Psoas muscle (tissue), 8 donors: ENCODE measurements at regions of chr22 and their contacts with region 1.

Region 1: GRCh38 chr22:25021976-25022711 is 69.6 kb downstream of the KIAA1671 start:
- DNase-seq: no peak
- ATAC-seq: no peak
- H3K4me3 ChIP-seq: no peak overlapping the region
- H3K27ac ChIP-seq: no peak overlapping the region
- H3K4me1 ChIP-seq: peaks cover 5% of the 10 kb centered on the region
- H3K27me3 ChIP-seq: peaks cover 0 to 9% (median 2%) of the 10 kb centered on the region in 3 donors
- CTCF ChIP-seq: no peak

Region 2: DNA sequence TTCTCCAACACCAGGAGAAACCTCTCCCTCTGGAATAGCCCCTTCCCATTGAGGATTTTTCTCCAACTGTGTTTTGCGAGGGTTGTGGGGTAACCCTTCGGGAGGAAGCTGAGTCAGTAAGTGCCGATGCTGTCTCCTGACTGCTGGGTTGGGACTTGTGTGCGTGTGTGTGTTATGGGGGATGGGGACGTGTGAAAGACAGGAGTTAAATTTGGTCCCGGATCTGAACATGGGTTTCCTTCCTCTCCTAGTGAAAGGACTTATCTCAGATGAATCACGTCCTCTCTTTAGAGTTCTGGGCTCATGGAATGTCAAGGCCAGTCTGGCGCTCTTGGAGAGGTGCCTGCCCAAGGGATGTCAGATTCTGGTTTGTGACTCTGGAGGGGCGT is 36.3 kb before region 1 on chr22:
- intact Hi-C with region 1: loop called in 1 of 2 experiments (anchors 5 kb)
- DNase-seq: no peak
- ATAC-seq: peak; percentile 27 to 67 (median 64)
- H3K4me3 ChIP-seq: no peak overlapping the region
- H3K27ac ChIP-seq: peak overlapping the region; percentile 60
- H3K4me1 ChIP-seq: no peaks in the 10 kb centered on the region
- H3K27me3 ChIP-seq: no peaks in the 10 kb centered on the region
- CTCF ChIP-seq: no peak